Mammary epithelial cell (primary cell): ENCODE measurements at regions of chr2 and their contacts with region 1.

Region 1: DNA sequence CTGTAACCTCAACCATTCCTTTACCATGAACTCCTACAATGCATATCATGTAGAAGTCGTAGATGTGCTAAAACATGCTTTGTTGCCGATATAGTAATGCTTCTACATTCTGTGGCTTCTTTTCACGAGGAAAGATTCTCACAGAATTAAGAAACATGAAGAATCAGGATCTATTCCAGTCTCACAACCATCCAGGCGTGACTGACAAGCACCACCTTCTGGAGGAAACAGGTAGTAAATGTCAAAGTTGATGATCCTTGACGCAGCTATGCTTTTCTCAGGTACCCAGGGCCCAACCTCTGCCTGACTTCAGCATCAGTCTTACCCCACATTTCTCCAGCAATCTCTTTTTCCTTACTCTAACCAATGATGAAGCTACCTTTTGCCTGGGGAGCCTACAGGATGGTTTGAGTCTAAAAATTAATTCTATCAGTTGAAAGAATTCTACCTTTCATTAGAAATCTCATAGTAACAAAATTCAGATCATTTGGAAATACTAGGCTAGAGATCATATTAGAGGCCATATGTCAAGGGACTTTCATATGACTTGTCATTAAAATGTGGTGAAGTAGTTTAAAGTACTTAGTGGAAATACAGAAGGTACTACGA is 123.3 kb upstream of the RND3 start:
- DNase-seq: peak; percentile 70
- H3K4me3 ChIP-seq: no peak overlapping the region
- H3K27ac ChIP-seq: no peak overlapping the region
- H3K4me1 ChIP-seq: no peaks in the 10 kb centered on the region
- H3K27me3 ChIP-seq: no peaks in the 10 kb centered on the region
- CTCF ChIP-seq: peak; percentile 69 to 87

Region 2: GRCh38 chr2:150188177-150188576 is 422.6 kb before region 1 on chr2:
- CTCF ChIA-PET with region 1: no interaction called
- dilution Hi-C with region 1: no loop called
- in situ Hi-C with region 1: no loop called
- intact Hi-C with region 1: loop called (anchors 5 kb)
- DNase-seq: peak; percentile 37
- H3K4me3 ChIP-seq: no peak overlapping the region
- H3K27ac ChIP-seq: peak overlapping the region; percentile 14
- H3K4me1 ChIP-seq: peaks cover 21% of the 10 kb centered on the region
- H3K27me3 ChIP-seq: no peaks in the 10 kb centered on the region
- CTCF ChIP-seq: peak in 1 of 2 donors; percentile 35

Region 3: GRCh38 chr2:150528861-150529801 is 81.6 kb before region 1 on chr2:
- CTCF ChIA-PET with region 1: no interaction called
- dilution Hi-C with region 1: no loop called
- in situ Hi-C with region 1: no loop called
- intact Hi-C with region 1: loop called (anchors 1 kb)
- DNase-seq: peak; percentile 95
- H3K4me3 ChIP-seq: no peak overlapping the region
- H3K27ac ChIP-seq: peak overlapping the region; percentile 95
- H3K4me1 ChIP-seq: peaks cover 54% of the 10 kb centered on the region
- H3K27me3 ChIP-seq: no peaks in the 10 kb centered on the region
- CTCF ChIP-seq: no peak

Region 4: GRCh38 chr2:151051574-151052220 is 440.9 kb after region 1 on chr2:
- CTCF ChIA-PET with region 1: no interaction called
- dilution Hi-C with region 1: no loop called
- in situ Hi-C with region 1: no loop called
- intact Hi-C with region 1: loop called (anchors 5 kb)
- DNase-seq: peak; percentile 60
- H3K4me3 ChIP-seq: no peak overlapping the region
- H3K27ac ChIP-seq: no peak overlapping the region
- H3K4me1 ChIP-seq: peaks cover 29% of the 10 kb centered on the region
- H3K27me3 ChIP-seq: no peaks in the 10 kb centered on the region
- CTCF ChIP-seq: peak; percentile 85 to 86

Region 5: DNA sequence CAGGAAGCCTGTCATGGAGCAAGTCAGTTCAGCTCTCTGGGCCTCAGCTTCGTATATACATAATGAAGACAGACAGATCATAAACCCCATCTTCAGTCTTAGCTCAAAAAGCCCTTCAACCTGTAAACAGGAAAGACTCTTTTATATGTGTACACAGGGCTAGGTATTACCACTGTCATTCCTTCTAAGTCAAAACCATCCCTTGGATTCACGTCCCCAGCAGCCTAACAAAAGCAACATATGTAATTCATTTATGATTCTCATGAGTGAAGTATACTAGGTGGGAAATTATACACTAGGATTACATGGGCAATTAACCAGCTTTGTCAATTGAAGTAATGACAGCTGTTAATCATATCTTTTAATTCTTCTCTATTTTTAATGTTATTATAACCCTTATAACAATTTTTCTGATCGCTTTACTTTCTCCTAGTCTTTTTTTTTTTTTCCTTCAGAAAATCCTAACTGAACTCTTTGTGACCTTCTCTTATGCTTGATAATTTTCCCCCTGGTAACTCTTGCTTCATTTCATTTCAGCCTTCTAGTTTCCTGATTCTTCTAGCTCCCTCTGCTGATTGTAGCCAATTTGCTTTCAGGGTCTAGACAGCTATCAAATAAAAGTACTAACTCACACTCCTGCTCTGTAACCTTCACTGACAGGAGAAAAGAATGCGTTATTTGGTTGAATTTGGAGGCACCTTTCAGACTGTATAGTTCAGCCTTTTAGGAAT is 551.2 kb after region 1 on chr2:
- CTCF ChIA-PET with region 1: no interaction called
- dilution Hi-C with region 1: no loop called
- in situ Hi-C with region 1: no loop called
- intact Hi-C with region 1: loop called (anchors 10 kb)
- DNase-seq: peak; percentile 14
- H3K4me3 ChIP-seq: no peak overlapping the region
- H3K27ac ChIP-seq: no peak overlapping the region
- H3K4me1 ChIP-seq: no peaks in the 10 kb centered on the region
- H3K27me3 ChIP-seq: peaks cover 6% of the 10 kb centered on the region
- CTCF ChIP-seq: peak in 1 of 2 donors; percentile 55